ENCODE measurements at regions of chr2 and their contacts with region 1.

Region 1: DNA sequence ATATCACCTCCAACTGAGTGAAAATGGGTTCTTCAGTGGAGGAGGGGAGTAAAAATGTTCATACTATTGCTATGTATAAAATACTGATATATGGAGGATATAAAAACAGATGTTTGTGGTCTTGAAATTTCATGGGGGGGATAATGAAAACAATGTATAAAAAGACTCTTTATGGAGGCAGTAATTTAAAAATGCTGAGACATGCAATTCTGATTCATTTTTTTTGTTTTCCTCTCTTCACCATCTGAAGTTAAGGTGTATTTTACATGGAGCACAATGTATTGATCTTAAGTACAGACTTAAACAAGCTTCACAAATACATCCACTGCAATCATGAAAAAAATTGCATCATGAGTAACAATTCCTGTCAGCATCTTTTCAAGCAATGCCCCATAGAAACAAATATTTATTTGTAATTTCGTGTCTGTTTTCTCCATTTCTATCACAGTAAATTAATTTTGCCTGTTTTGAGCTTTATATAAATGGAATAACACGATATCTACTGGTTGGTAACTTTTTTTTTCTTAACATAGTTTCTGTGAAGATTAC is 393.2 kb upstream of the ZNF804A start:
- DNase-seq: no peak
- H3K4me3 ChIP-seq: no peak overlapping the region
- H3K27ac ChIP-seq: no peak overlapping the region
- H3K4me1 ChIP-seq: no peaks in the 10 kb centered on the region
- H3K27me3 ChIP-seq: no peaks in the 10 kb centered on the region
- CTCF ChIP-seq: no peak

Region 2: DNA sequence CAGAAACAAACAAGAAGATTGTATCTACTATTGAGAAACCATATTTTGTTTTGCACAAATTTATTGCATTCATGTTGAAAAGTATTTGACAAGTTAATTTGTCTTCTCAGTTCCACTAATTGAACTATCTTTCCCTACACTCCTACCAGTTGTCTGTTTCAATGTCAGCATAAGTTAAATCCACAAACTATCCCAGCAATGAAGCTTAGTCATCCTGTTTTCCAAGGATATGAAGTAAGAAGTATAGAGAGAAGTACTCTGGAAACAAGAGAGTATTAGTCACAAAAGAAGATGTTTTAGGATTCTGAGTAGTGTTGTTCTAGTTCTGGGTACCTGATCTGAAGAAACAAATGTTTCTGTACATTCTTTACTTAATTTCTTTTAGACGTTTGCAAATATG is 131.6 kb after region 1 on chr2:
- intact Hi-C with region 1: no loop called
- DNase-seq: no peak
- H3K4me3 ChIP-seq: no peak overlapping the region
- H3K27ac ChIP-seq: no peak overlapping the region
- H3K4me1 ChIP-seq: no peaks in the 10 kb centered on the region
- H3K27me3 ChIP-seq: no peaks in the 10 kb centered on the region
- CTCF ChIP-seq: no peak

Region 3: DNA sequence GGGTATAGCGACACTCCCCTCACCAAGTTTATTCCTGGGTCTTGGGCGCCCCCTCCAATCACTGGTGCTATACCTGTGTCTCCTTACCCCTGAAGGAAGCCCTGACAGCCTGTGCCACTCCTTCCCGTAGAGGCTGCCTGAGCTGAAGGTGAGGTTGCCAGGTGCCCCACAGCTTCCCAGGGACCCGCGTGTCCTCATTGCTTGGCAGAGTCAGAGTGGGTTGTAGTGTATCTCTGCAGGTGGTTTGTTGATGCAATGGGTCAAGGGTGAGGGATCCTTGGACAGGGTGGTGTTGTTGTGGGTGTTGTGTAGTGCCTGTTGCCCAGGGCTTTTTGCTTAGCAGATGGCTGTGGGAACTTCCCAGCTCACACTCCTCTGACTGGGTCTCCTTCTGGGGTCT is 1094.7 kb after region 1 on chr2:
- intact Hi-C with region 1: loop called (anchors 5 kb)
- DNase-seq: peak in 1 of 2 donors; percentile 51
- H3K4me3 ChIP-seq: no peak overlapping the region
- H3K27ac ChIP-seq: no peak overlapping the region
- H3K4me1 ChIP-seq: no peaks in the 10 kb centered on the region
- H3K27me3 ChIP-seq: no peaks in the 10 kb centered on the region
- CTCF ChIP-seq: no peak

Measured in tibial artery (tissue), 4 donors.